Esophagus muscularis mucosa (tissue), 4 donors: ENCODE measurements at regions of chr4 and their contacts with region 1.

Region 1: GRCh38 chr4:108570993-108571569 is 49.3 kb upstream of the RPL34 start:
- DNase-seq: no peak
- H3K4me3 ChIP-seq: no peak overlapping the region
- H3K27ac ChIP-seq: no peak overlapping the region
- H3K4me1 ChIP-seq: peaks cover 0 to 4% (median 0%) of the 10 kb centered on the region in 4 donors
- H3K27me3 ChIP-seq: peaks cover 0 to 10% (median 0%) of the 10 kb centered on the region in 4 donors
- CTCF ChIP-seq: no peak
- EP300 ChIP-seq: no peak
- POLR2A ChIP-seq: no peak

Region 2: GRCh38 chr4:108018040-108018883 is 552.8 kb before region 1 on chr4:
- intact Hi-C with region 1: loop called (anchors 5 kb)
- DNase-seq: peak; percentile 96
- H3K4me3 ChIP-seq: no peak overlapping the region
- H3K27ac ChIP-seq: no peak overlapping the region
- H3K4me1 ChIP-seq: peaks cover 0 to 5% (median 0%) of the 10 kb centered on the region in 4 donors
- H3K27me3 ChIP-seq: no peaks in the 10 kb centered on the region
- CTCF ChIP-seq: peak; percentile 78 to 89 (median 85)
- EP300 ChIP-seq: no peak
- POLR2A ChIP-seq: no peak

Region 3: GRCh38 chr4:108030332-108030731 is 540.7 kb before region 1 on chr4:
- intact Hi-C with region 1: loop called (anchors 5 kb)
- DNase-seq: no peak
- H3K4me3 ChIP-seq: no peak overlapping the region
- H3K27ac ChIP-seq: no peak overlapping the region
- H3K4me1 ChIP-seq: peaks cover 0 to 5% (median 0%) of the 10 kb centered on the region in 4 donors
- H3K27me3 ChIP-seq: no peaks in the 10 kb centered on the region
- CTCF ChIP-seq: peak in 2 of 3 experiments; percentile 12 to 18
- EP300 ChIP-seq: no peak
- POLR2A ChIP-seq: no peak

Region 4: DNA sequence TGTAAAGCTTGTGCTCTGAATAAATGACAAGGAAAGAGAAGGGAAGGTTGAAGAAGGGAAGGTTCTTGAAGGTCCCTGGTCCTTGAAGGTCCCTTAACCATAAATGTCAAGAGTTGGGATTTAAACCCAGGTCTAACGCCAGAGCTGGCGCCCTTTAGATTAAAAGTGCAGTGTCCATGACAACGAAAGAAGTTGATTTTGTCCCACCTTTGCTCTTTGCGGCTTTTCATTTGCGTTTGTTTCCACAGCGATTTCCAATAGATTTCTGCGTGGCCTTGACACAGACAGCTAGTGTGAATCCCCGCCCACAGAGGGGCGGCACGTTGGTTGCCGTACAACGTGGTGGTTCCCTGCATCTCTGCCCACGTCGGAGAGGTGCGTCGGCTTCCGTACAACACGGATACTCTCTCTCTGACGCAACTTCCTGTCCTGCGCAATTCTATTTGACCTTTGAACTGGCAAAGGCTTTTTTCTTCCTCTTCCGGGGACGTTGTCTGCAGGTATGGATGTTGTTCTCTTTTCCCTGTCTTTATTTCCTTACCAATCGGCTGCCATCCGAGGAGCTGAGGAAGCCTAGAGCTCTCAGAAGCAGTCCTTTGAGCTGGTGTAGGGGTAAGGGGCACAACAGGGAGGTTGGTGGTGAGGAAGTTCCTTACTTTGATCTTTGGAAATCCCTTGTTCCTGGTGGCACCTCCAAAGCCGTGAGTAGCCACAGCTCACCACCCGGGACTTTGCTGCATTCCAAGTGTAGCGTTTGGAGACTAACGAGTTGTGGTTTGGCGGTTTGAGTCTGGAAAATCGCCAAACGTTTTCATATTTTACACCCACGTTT is 49.2 kb after region 1 on chr4 and contains the start of gene RPL34:
- intact Hi-C with region 1: no loop called
- DNase-seq: peak; percentile 99
- H3K4me3 ChIP-seq: peak within 1 kb of the TSS; percentile 63 to 78 (median 72)
- H3K27ac ChIP-seq: peak within 1 kb of the TSS; percentile 83 to 84 (median 84)
- H3K4me1 ChIP-seq: peaks cover 12 to 46% (median 38%) of the 10 kb centered on the region in 4 donors
- H3K27me3 ChIP-seq: no peaks in the 10 kb centered on the region
- CTCF ChIP-seq: peak in 1 of 3 experiments; percentile 3
- EP300 ChIP-seq: no peak
- POLR2A ChIP-seq: peak; percentile 95
- total RNA-seq, gene RPL34: 578 to 1,199 (median 854) TPM